A549 (cell line): ENCODE measurements at regions of chr9 and their contacts with region 1.

Region 1: DNA sequence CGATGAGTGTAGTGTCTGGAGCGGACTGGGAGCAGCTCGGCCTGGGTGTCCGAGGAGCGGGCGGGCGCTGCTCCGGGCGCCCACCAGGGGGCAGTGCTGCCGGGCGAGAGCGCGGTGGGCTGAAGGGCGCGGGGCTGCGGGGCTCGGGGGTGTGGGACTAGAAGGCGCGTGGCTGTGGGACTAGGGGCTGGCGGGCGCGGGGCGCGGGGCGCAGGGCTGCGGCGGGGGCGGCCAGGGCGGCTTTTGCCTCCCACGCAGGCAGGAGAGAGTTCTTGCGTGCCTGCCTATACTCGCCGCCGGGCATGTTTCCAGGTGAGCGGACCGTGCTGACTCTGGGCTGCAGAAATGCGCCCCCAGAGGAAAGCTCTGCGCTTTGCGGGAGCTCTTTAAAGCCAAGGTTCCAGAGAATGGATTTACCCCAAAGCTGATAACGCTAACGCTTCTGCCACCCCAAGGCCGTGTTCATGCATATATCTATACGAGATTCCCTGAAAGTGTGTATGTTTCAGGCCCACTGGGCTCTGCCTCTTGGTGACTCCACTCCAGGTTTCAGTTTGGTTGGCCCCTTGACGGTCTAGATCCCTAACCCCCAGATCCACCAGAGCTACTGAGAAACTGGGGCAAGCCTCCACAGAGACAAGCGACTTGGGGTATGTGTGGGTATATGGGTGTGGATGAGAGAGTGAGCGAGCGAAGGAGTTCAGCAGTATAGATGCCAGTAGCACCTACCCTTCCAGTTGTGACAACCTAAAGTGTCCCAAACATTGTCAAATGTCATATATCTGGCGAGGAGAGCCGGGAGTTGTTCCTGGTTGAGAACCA is 56.2 kb downstream of the ACER2 start:
- DNase-seq: peak; percentile 79 to 92
- ATAC-seq: peak; percentile 91 to 97
- H3K4me3 ChIP-seq: peak overlapping the region; percentile 48
- H3K27ac ChIP-seq: peak overlapping the region; percentile 68 to 95
- H3K4me1 ChIP-seq: no peaks in the 10 kb centered on the region
- CTCF ChIP-seq: peak; percentile 90
- EP300 ChIP-seq: no peak
- POLR2A ChIP-seq: no peak
- RAD21 ChIP-seq: peak; percentile 25 to 57; a peak in 4 of 5 replicates

Region 2: GRCh38 chr9:19408693-19409400 is 56.1 kb before region 1 on chr9 and contains the start of gene ACER2:
- CTCF ChIA-PET with region 1: interaction called, 14 read pairs
- POLR2A ChIA-PET with region 1: no interaction called
- DNase-seq: peak; percentile 88 to 90
- ATAC-seq: peak; percentile 93 to 96
- H3K4me3 ChIP-seq: peak within 1 kb of the TSS; percentile 65
- H3K27ac ChIP-seq: peak within 1 kb of the TSS; percentile 74 to 90
- H3K4me1 ChIP-seq: peaks cover 5% of the 10 kb centered on the region; the same call in 2 of the 3 replicates
- CTCF ChIP-seq: no peak
- EP300 ChIP-seq: no peak
- POLR2A ChIP-seq: peak; percentile 87
- RAD21 ChIP-seq: no peak
- polyA plus RNA-seq, gene ACER2: 3.7 and 4.6 TPM in 2 replicates

Region 3: GRCh38 chr9:19431361-19432171 is 33.4 kb before region 1 on chr9:
- CTCF ChIA-PET with region 1: interaction called, 15 read pairs
- POLR2A ChIA-PET with region 1: interaction called, 3 read pairs
- DNase-seq: no peak
- ATAC-seq: no peak
- H3K4me3 ChIP-seq: no peak overlapping the region
- H3K27ac ChIP-seq: no peak overlapping the region
- H3K4me1 ChIP-seq: no peaks in the 10 kb centered on the region
- CTCF ChIP-seq: no peak
- EP300 ChIP-seq: no peak
- POLR2A ChIP-seq: no peak
- RAD21 ChIP-seq: no peak

Region 4: GRCh38 chr9:19481971-19482404 is 17.0 kb after region 1 on chr9:
- CTCF ChIA-PET with region 1: interaction called, 28 read pairs
- POLR2A ChIA-PET with region 1: no interaction called
- DNase-seq: no peak
- ATAC-seq: peak; percentile 35 to 49; a peak in 2 of 6 replicates
- H3K4me3 ChIP-seq: no peak overlapping the region
- H3K27ac ChIP-seq: no peak overlapping the region
- H3K4me1 ChIP-seq: no peaks in the 10 kb centered on the region
- CTCF ChIP-seq: no peak
- EP300 ChIP-seq: no peak
- POLR2A ChIP-seq: no peak
- RAD21 ChIP-seq: no peak

Region 5: GRCh38 chr9:19922476-19923118 is 457.6 kb after region 1 on chr9:
- CTCF ChIA-PET with region 1: interaction called, 15 read pairs
- POLR2A ChIA-PET with region 1: no interaction called
- DNase-seq: peak; percentile 28 to 50
- ATAC-seq: peak; percentile 48 to 66
- H3K4me3 ChIP-seq: no peak overlapping the region
- H3K27ac ChIP-seq: no peak overlapping the region
- H3K4me1 ChIP-seq: no peaks in the 10 kb centered on the region
- CTCF ChIP-seq: peak; percentile 43
- EP300 ChIP-seq: no peak
- POLR2A ChIP-seq: no peak
- RAD21 ChIP-seq: peak; percentile 64 to 72